ENCODE measurements at regions of chr10 and their contacts with region 1.

Region 1: GRCh38 chr10:119872860-119873681 is 428 bp upstream of the MCMBP start:
- DNase-seq: peak; percentile 87
- H3K4me3 Mint-ChIP-seq: peak overlapping the region; percentile 84
- H3K27ac Mint-ChIP-seq: peak overlapping the region; percentile 80
- H3K4me1 Mint-ChIP-seq: peaks cover 34% of the 10 kb centered on the region
- H3K27me3 Mint-ChIP-seq: no peaks in the 10 kb centered on the region

Region 2: DNA sequence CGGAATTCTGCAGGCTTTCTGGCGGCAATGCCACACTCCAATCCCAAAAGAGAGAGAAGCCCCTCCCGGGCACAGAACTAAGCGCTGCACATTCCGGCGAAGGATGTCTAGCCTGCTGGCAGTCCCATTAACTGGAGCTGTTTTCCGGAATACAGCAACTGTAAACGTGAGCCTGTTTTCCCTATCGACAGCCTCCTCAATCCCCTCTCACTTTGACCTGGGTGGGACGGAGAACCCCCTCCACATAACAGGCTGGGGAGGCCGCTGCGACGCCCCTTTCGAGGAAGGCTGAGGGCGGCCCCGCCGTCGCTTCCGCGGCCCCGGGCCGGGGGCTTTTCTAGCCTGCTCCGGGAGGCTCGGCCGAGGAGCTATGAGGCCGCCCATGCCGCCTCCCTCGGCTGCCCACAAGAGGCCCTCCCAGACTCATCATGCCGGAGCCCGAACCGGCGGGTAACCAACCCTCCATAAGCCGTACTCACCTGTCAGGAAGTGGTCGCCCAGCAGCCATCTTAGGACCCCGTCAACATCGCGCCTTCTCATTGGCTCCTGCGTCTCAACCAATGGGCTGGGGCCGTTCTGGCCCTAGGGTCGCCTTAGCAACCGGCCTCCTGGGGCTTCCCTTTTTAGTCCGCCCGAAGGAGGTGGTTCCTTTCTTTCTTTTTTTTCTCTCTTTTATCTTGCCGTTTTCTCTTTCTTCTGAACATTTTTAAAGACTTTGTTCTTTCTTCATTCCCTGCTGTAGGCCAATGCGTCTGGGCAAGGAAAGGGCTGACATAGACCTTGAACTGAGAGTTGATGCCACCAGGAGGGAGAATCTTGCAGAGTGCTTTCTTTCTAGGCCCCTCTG is 1531.1 kb before region 1 on chr10 and contains the start of gene FAM204A:
- intact Hi-C with region 1: loop called (anchors 2 kb)
- DNase-seq: peak; percentile 94
- H3K4me3 Mint-ChIP-seq: peak within 1 kb of the TSS; percentile 92
- H3K27ac Mint-ChIP-seq: peak within 1 kb of the TSS; percentile 92
- H3K4me1 Mint-ChIP-seq: peaks cover 32% of the 10 kb centered on the region
- H3K27me3 Mint-ChIP-seq: peaks cover 6% of the 10 kb centered on the region
- total RNA-seq, gene FAM204A: 61.8 and 63.3 TPM in 2 replicates

Region 3: GRCh38 chr10:119725828-119726675 is 147.0 kb before region 1 on chr10 and contains the start of gene INPP5F:
- intact Hi-C with region 1: loop called (anchors 1 kb)
- DNase-seq: peak; percentile 98
- H3K4me3 Mint-ChIP-seq: peak within 1 kb of the TSS; percentile 93
- H3K27ac Mint-ChIP-seq: peak within 1 kb of the TSS; percentile 81
- H3K4me1 Mint-ChIP-seq: peaks cover 39% of the 10 kb centered on the region
- H3K27me3 Mint-ChIP-seq: no peaks in the 10 kb centered on the region
- total RNA-seq, gene INPP5F: 17.7 and 19.4 TPM in 2 replicates

Region 4: DNA sequence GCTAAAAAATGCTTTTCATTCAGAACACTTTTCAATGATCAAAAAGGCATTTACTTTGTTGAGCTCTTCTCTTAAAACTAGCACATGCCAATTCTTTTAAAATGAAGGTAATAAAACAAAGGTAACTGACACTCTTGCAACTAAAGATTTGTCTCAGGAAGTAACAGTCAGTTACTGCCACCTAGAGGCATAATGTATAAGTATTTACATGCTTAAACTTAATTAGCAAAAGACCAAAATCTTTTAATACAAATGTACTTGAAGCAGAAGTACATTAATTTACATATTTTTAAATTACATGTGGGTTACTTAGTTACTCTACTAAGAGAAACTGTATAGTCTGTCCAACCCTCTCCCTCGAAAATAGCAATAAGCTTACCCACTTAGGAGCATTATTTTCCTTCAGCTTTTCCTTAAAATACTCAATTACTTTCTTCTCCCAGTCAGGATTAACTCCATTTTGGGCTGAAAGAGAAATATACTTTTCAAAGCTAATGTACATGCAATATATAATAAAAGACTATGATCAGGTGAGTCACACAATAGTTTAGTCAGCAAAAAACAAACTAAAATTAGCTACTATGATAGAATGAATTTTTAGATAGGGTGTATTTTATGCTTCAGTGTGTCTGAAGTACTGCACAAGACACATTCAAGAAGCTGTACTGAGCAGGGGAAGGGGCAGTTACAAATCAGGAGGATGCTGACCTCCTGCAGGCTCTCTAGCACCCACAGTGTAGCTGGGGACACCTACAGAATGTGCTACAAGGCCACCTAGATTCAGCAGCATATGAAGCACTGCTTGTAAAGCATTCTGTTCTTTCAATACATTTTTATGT is 13.4 kb before region 1 on chr10:
- intact Hi-C with region 1: loop called (anchors 1 kb)
- DNase-seq: no peak
- H3K4me3 Mint-ChIP-seq: no peak overlapping the region
- H3K27ac Mint-ChIP-seq: peak overlapping the region; percentile 35
- H3K4me1 Mint-ChIP-seq: peaks cover 45% of the 10 kb centered on the region
- H3K27me3 Mint-ChIP-seq: no peaks in the 10 kb centered on the region

Region 5: GRCh38 chr10:119892188-119893065 is 19.4 kb after region 1 on chr10 and contains the start of gene SEC23IP:
- intact Hi-C with region 1: loop called (anchors 1 kb)
- DNase-seq: peak; percentile 92
- H3K4me3 Mint-ChIP-seq: peak within 1 kb of the TSS; percentile 92
- H3K27ac Mint-ChIP-seq: peak within 1 kb of the TSS; percentile 96
- H3K4me1 Mint-ChIP-seq: peaks cover 53% of the 10 kb centered on the region
- H3K27me3 Mint-ChIP-seq: peaks cover 4% of the 10 kb centered on the region
- total RNA-seq, gene SEC23IP: 79.7 and 91.7 TPM in 2 replicates

Measured in activated T-helper 1 cell treated with anti-CD3 and anti-CD28 coated beads, Interleukin-12 subunit alpha, Interleukin-12 subunit beta, Interleukin-2, Interleukin-4 antibody, amounts not matched to agents 30 ng/mL and 10 ng/mL and 1 ng/mL, durations not matched to agents 14 hours and 24 hours and 36 hours (primary cell).